H1 (cell line): ENCODE measurements at regions of chr12 and their contacts with region 1.

Region 1: GRCh38 chr12:93419388-93420034 is 22.2 kb downstream of the UBE2N start:
- DNase-seq: no peak
- H3K4me3 ChIP-seq: no peak overlapping the region
- H3K27ac ChIP-seq: no peak overlapping the region
- H3K4me1 ChIP-seq: peaks cover 0 to 8% (median 5%) of the 10 kb centered on the region in 4 experiments; a peak in 6 of 7 replicates
- H3K27me3 ChIP-seq: no peaks in the 10 kb centered on the region
- CTCF ChIP-seq: peak in 1 of 3 experiments; percentile 46; a peak in 2 of 4 replicates
- EP300 ChIP-seq: no peak
- POLR2A ChIP-seq: no peak
- RAD21 ChIP-seq: peak in 1 of 2 experiments; percentile 38; a peak in 3 of 4 replicates

Region 2: DNA sequence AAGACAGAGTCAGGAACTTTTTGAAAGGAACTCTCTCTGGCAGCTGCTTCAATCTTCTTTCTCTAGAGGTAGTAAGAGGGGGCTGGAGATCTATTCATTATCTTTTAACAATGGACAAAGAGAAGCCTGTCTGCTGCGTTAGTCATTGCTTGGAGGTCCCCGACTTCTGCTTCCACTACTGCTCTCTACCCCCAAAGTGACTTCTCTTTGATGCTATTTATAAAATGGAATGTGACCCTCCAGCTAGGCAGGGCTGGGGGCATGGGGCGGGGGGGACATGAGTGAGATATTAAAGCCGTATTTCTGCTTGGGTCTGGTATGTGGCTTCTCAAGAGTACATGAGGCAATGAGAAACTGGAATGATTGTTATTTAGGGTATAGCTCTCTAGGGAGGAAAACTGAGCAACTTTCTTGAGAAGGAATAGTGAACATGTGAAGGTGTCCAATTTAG is 83.2 kb before region 1 on chr12:
- CTCF ChIA-PET with region 1: no interaction called
- POLR2A ChIA-PET with region 1: no interaction called
- DNase-seq: no peak
- H3K4me3 ChIP-seq: no peak overlapping the region
- H3K27ac ChIP-seq: no peak overlapping the region
- H3K4me1 ChIP-seq: no peaks in the 10 kb centered on the region; a peak in 1 of 7 replicates
- H3K27me3 ChIP-seq: no peaks in the 10 kb centered on the region
- CTCF ChIP-seq: no peak
- EP300 ChIP-seq: no peak
- POLR2A ChIP-seq: no peak
- RAD21 ChIP-seq: no peak

Region 3: GRCh38 chr12:93378373-93379325 is 40.9 kb before region 1 on chr12:
- CTCF ChIA-PET with region 1: interaction called, 12 read pairs
- POLR2A ChIA-PET with region 1: no interaction called
- DNase-seq: peak in 1 of 2 experiments; percentile 66
- H3K4me3 ChIP-seq: peak overlapping the region; percentile 59 to 96 (median 82)
- H3K27ac ChIP-seq: 0 out of 2 replicates have a peak overlapping the region, but pooled peaks have one; percentile 16
- H3K4me1 ChIP-seq: peaks cover 13 to 20% (median 15%) of the 10 kb centered on the region in 4 experiments; a peak in 6 of 7 replicates
- H3K27me3 ChIP-seq: no peaks in the 10 kb centered on the region
- CTCF ChIP-seq: no peak
- EP300 ChIP-seq: no peak
- POLR2A ChIP-seq: peak in 1 of 2 experiments; percentile 75; a peak in 1 of 3 replicates
- RAD21 ChIP-seq: no peak

Region 4: DNA sequence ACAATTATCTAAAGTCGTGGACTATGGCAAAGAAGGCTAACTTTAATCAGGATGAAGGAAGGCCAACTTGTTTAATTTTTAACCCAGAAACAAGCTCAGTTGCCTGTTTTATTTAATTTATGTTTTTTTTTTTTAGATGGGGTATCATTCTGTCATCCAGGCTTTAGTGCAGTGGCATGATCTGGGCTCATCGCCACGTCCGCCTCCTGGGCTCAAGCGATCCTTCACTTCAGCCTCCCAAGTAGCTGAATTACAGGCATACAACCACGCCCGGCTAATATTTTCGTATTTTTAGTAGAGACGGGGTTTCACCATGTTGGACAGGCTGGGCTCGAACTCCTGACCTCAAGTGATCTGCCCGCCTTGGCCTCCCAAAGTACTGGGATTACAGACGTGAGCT is 22.1 kb before region 1 on chr12:
- CTCF ChIA-PET with region 1: interaction called, 20 read pairs
- POLR2A ChIA-PET with region 1: interaction called, 23 read pairs
- DNase-seq: no peak
- H3K4me3 ChIP-seq: no peak overlapping the region
- H3K27ac ChIP-seq: no peak overlapping the region
- H3K4me1 ChIP-seq: no peaks in the 10 kb centered on the region
- H3K27me3 ChIP-seq: no peaks in the 10 kb centered on the region
- CTCF ChIP-seq: no peak
- EP300 ChIP-seq: no peak
- POLR2A ChIP-seq: no peak
- RAD21 ChIP-seq: no peak

Region 5: DNA sequence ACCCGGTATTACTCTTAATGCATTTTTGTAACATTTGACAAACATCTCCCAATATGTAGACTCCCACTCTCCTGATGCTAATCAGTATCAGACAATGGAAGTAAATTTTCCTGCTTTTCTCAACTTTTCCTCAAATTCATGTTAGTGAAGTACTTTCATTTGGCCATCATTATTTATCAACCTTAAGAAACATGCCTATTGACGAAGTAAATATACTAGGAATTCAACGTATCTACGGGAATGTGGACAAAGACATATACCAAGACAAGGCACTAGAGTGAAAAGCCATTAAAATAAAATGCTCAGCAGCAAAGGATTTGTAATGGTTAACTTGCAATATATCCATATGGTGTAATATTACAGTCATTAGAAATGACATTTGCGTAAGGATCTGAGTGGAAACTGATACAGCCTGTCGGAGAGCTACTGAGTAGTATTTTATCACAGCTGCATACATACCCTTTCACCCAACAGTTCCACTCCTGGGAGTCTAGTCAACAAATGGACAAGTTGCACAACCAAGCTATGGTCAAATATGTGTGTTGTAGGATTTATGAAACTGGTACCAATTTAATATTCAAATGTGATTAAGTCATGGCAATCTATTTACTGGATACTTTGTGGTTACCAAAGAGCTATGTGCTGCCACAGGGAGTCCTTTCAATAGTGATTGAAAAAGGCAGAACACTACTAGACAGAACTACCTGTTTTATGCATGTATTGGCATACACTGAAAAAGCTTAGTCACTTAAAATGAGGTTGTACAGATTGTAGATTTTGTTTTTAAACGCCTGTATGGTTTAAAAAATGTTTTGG is 15.3 kb before region 1 on chr12:
- CTCF ChIA-PET with region 1: interaction called, 22 read pairs
- POLR2A ChIA-PET with region 1: interaction called, 23 read pairs
- DNase-seq: no peak
- H3K4me3 ChIP-seq: no peak overlapping the region
- H3K27ac ChIP-seq: no peak overlapping the region
- H3K4me1 ChIP-seq: no peaks in the 10 kb centered on the region
- H3K27me3 ChIP-seq: no peaks in the 10 kb centered on the region
- CTCF ChIP-seq: no peak
- EP300 ChIP-seq: no peak
- POLR2A ChIP-seq: no peak
- RAD21 ChIP-seq: no peak

Region 6: GRCh38 chr12:93430280-93430679 is 10.8 kb after region 1 on chr12:
- CTCF ChIA-PET with region 1: interaction called, 11 read pairs
- POLR2A ChIA-PET with region 1: interaction called, 3 read pairs
- DNase-seq: no peak
- H3K4me3 ChIP-seq: no peak overlapping the region
- H3K27ac ChIP-seq: no peak overlapping the region
- H3K4me1 ChIP-seq: peaks cover 0 to 2% (median 0%) of the 10 kb centered on the region in 4 experiments; a peak in 2 of 7 replicates
- H3K27me3 ChIP-seq: no peaks in the 10 kb centered on the region
- CTCF ChIP-seq: no peak
- EP300 ChIP-seq: no peak
- POLR2A ChIP-seq: no peak
- RAD21 ChIP-seq: no peak

Region 7: DNA sequence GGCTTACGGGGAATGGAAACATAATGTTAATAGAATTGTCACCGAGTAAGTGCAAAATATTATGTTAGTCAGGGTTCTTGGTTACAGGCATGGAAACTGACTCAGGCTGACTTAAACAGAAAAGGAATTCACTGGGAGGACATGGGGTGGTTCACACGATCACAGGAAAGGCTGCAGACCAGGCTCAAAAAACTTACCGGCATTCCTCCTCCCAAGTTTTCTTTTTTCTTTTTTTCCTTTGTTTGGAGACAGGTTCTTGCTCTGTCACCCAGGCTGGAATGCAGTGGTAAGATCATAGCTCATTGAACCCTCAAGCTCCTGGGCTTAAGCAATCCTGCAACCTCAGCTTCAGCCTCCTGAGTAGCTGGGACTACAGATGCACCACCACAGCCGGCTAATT is 34.1 kb after region 1 on chr12:
- CTCF ChIA-PET with region 1: no interaction called
- POLR2A ChIA-PET with region 1: no interaction called
- DNase-seq: no peak
- H3K4me3 ChIP-seq: no peak overlapping the region
- H3K27ac ChIP-seq: no peak overlapping the region
- H3K4me1 ChIP-seq: no peaks in the 10 kb centered on the region
- H3K27me3 ChIP-seq: no peaks in the 10 kb centered on the region
- CTCF ChIP-seq: no peak
- EP300 ChIP-seq: no peak
- POLR2A ChIP-seq: no peak
- RAD21 ChIP-seq: no peak

Region 8: GRCh38 chr12:93467351-93468007 is 48.0 kb after region 1 on chr12 and contains the start of gene MRPL42:
- CTCF ChIA-PET with region 1: no interaction called
- POLR2A ChIA-PET with region 1: no interaction called
- DNase-seq: peak; percentile 70 to 98
- H3K4me3 ChIP-seq: peak within 1 kb of the TSS; percentile 84 to 99 (median 94)
- H3K27ac ChIP-seq: peak within 1 kb of the TSS; percentile 98
- H3K4me1 ChIP-seq: no peaks in the 10 kb centered on the region
- H3K27me3 ChIP-seq: no peaks in the 10 kb centered on the region
- CTCF ChIP-seq: peak; percentile 40 to 57 (median 47)
- EP300 ChIP-seq: no peak
- POLR2A ChIP-seq: peak; percentile 79 to 97
- RAD21 ChIP-seq: peak; percentile 20 to 21; a peak in 3 of 4 replicates
- total RNA-seq, gene MRPL42: 171 and 176 TPM in 2 replicates

Region 9: DNA sequence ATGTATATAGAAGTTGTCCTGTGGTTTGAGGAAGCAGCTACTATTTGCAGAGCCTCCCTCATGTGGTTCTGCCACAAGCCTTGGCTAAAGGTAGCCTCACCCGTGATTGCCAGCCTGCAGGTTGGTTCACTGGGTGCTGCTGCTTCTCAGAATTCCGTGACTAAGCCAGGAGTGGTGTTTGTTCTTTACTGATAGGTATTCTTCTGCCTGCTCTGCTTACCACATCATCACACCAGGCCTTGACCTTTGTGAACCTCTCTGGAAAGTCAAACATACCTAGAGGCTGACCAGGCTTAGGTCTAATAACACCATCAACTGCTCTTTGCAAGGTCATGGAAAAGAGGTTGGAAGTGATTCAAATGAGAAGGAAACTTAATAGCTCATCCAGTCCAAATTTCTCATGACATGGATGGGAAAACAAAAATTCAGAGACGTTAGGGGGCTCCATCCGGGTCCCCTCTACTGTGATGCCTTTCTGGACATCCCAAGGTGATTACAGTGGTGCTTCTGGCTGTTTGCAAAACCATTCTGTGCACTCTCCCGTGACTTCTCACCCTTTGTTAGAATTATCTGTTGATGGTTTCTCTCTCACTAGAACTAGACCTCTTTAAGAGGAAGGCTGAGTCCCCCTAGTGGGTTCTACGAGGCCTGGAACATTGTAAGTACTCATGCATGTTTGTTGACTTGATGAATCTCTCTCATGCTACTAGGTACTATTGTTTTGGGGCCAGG is 144.5 kb after region 1 on chr12:
- CTCF ChIA-PET with region 1: no interaction called
- POLR2A ChIA-PET with region 1: no interaction called
- DNase-seq: no peak
- H3K4me3 ChIP-seq: no peak overlapping the region
- H3K27ac ChIP-seq: no peak overlapping the region
- H3K4me1 ChIP-seq: no peaks in the 10 kb centered on the region
- H3K27me3 ChIP-seq: no peaks in the 10 kb centered on the region
- CTCF ChIP-seq: peak in 2 of 3 experiments; percentile 30 to 32; a peak in 2 of 4 replicates
- EP300 ChIP-seq: no peak
- POLR2A ChIP-seq: no peak
- RAD21 ChIP-seq: peak; percentile 44 to 62